ENCODE measurements at regions of chr2 and their contacts with region 1.

Region 1: GRCh38 chr2:233598952-233599351 is 18.5 kb upstream of the UGT1A8 start:
- DNase-seq: no peak
- H3K4me3 ChIP-seq: no peak overlapping the region
- H3K27ac ChIP-seq: no peak overlapping the region
- H3K4me1 ChIP-seq: no peaks in the 10 kb centered on the region
- H3K27me3 ChIP-seq: peaks cover 0 to 3% (median 0%) of the 10 kb centered on the region in 5 experiments

Region 2: GRCh38 chr2:233100192-233100998 is 498.6 kb before region 1 on chr2:
- CTCF ChIA-PET with region 1: no interaction called
- POLR2A ChIA-PET with region 1: no interaction called
- DNase-seq: peak; percentile 63 to 88 (median 86)
- H3K4me3 ChIP-seq: peak overlapping the region in 3 of 7 experiments; percentile 2 to 34 (median 22)
- H3K27ac ChIP-seq: peak overlapping the region; percentile 42 to 67
- H3K4me1 ChIP-seq: peaks cover 25 to 48% (median 32%) of the 10 kb centered on the region in 4 experiments
- H3K27me3 ChIP-seq: no peaks in the 10 kb centered on the region

Region 3: DNA sequence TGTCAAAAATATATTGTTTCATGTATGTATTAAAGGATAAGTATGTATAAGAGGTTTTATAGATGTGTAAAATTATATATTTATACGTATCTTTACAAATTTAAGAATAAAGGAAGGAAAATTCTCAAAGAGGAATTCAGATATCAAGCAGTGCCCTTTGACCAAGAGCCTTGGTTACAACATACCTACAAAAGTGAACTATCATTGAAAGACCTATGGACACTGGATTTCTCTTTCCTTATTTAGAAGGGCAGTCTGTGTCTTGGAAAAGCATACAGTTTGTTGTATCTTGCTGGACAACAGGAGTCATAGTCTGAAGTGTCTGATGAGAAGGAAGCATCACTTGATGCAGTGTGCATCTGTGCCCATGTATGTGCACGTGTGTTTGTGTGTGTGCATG is 10.6 kb before region 1 on chr2:
- CTCF ChIA-PET with region 1: no interaction called
- POLR2A ChIA-PET with region 1: interaction called, 10 read pairs
- DNase-seq: no peak
- H3K4me3 ChIP-seq: no peak overlapping the region
- H3K27ac ChIP-seq: no peak overlapping the region
- H3K4me1 ChIP-seq: no peaks in the 10 kb centered on the region
- H3K27me3 ChIP-seq: no peaks in the 10 kb centered on the region

Measured in common myeloid progenitor, CD34-positive (primary cell).